CD4-positive, alpha-beta memory T cell (primary cell): ENCODE measurements at regions of chr6 and their contacts with region 1.

Region 1: GRCh38 chr6:134174672-134175198 is 122.3 kb upstream of the SLC2A12 start:
- DNase-seq: peak; percentile 88 to 93 (median 91)
- H3K4me3 ChIP-seq: peak overlapping the region; percentile 39 to 98
- H3K4me3 Mint-ChIP-seq: peak overlapping the region; percentile 95 to 98 (median 98)
- H3K27ac ChIP-seq: peak overlapping the region; percentile 86
- H3K27ac Mint-ChIP-seq: peak overlapping the region; percentile 91 to 99 (median 96)
- H3K4me1 ChIP-seq: peaks cover 68% of the 10 kb centered on the region
- H3K4me1 Mint-ChIP-seq: peaks cover 39 to 78% (median 63%) of the 10 kb centered on the region in 4 donors
- H3K27me3 ChIP-seq: no peaks in the 10 kb centered on the region
- H3K27me3 Mint-ChIP-seq: no peaks in the 10 kb centered on the region

Region 2: DNA sequence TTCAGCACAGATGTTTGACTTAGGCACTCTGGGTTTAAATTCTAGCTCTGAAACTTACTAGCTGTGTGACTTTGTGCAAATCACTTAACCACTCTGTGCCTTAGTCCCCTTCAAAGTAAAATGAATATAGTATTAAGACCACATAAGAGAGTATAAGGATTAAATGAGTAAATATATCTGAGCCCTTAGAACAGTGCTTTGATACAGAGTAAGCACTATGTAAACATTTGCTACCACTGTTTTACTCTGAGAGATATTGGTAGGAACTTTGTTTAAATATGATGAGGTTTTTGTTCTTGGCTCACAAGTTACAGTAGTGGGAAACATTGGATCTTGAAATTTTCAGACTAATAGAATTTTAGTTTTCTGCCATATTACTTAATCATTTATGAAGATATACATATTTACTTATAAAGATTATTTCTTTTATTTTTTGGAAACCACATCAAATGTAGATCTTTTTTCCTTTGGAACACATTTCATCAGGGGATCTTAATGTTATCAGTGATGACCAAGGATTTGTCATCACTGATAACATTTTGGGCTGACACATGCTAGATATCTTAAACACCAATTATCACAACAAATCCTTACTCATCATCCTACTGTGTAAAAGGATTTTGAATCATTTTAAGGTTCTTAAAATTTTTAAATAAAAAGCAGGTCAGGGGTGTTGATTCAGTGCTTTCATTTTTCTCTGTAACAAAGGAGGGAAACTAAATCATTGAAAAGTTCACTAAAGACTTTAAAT is 707.3 kb before region 1 on chr6:
- CTCF ChIA-PET with region 1: no interaction called
- POLR2A ChIA-PET with region 1: no interaction called
- intact Hi-C with region 1: no loop called
- DNase-seq: no peak
- H3K4me3 ChIP-seq: no peak overlapping the region
- H3K4me3 Mint-ChIP-seq: no peak overlapping the region
- H3K27ac ChIP-seq: no peak overlapping the region
- H3K27ac Mint-ChIP-seq: no peak overlapping the region
- H3K4me1 ChIP-seq: no peaks in the 10 kb centered on the region
- H3K4me1 Mint-ChIP-seq: no peaks in the 10 kb centered on the region
- H3K27me3 ChIP-seq: no peaks in the 10 kb centered on the region
- H3K27me3 Mint-ChIP-seq: no peaks in the 10 kb centered on the region

Region 3: DNA sequence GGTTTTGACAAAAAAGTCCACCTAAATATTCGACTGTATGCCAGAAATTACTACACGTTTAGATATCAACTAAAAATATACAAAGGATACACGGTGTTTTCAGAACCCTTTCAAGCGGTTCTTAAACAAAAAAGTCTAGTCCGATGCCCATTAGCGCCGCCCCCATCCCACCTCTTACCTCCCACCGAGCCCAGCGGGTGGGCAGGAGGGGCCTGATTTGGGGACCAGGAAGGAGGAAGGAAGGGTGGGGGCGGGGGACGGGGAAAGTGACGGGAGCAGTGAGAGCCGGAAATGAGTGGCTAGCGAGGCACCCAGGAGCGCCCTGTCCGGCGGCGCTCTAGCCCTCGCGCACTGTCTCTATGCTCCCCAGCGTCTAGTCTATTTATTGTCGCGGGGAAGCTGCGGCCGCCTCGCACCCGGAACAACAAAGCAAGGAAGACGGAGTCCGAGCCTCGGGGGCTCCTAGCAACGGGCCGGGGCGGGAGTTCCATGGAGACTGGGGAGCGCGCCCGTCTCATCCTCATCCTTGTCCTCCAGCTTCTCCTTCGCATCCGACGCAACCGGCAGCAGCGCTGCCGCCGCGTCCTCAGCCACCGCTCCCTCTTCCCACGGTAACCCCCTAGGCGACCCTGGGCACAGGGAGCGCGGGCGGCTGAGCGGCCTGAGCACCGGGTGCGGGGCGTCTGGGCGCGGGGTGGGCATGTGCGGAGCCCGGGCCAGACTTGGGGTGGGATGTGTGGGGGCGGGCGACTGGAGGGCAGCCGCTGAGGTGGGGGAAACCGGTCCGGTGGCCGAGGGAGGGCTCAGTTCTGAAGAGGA is 221.7 kb before region 1 on chr6 and contains the start of gene TBPL1:
- CTCF ChIA-PET with region 1: no interaction called
- POLR2A ChIA-PET with region 1: no interaction called
- intact Hi-C with region 1: loop called (anchors 2 kb)
- DNase-seq: peak; percentile 83 to 92 (median 84)
- H3K4me3 ChIP-seq: peak within 1 kb of the TSS; percentile 85 to 97
- H3K4me3 Mint-ChIP-seq: peak within 1 kb of the TSS; percentile 89 to 99 (median 97)
- H3K27ac ChIP-seq: peak within 1 kb of the TSS; percentile 65
- H3K27ac Mint-ChIP-seq: peak within 1 kb of the TSS; percentile 92 to 98 (median 96)
- H3K4me1 ChIP-seq: peaks cover 50% of the 10 kb centered on the region
- H3K4me1 Mint-ChIP-seq: peaks cover 37 to 55% (median 42%) of the 10 kb centered on the region in 4 donors
- H3K27me3 ChIP-seq: no peaks in the 10 kb centered on the region
- H3K27me3 Mint-ChIP-seq: no peaks in the 10 kb centered on the region
- total RNA-seq, gene TBPL1: 34.8 to 39.2 TPM

Region 4: GRCh38 chr6:134247231-134247833 is 72.6 kb after region 1 on chr6:
- CTCF ChIA-PET with region 1: interaction called, 8 read pairs
- POLR2A ChIA-PET with region 1: interaction called, 5 read pairs
- intact Hi-C with region 1: loop called (anchors 1 kb)
- DNase-seq: peak; percentile 85 to 95 (median 92)
- H3K4me3 ChIP-seq: peak overlapping the region in 1 of 2 donors; percentile 5
- H3K4me3 Mint-ChIP-seq: peak overlapping the region; percentile 60 to 82 (median 76)
- H3K27ac ChIP-seq: peak overlapping the region; percentile 60
- H3K27ac Mint-ChIP-seq: peak overlapping the region; percentile 90 to 99 (median 98)
- H3K4me1 ChIP-seq: peaks cover 63% of the 10 kb centered on the region
- H3K4me1 Mint-ChIP-seq: peaks cover 43 to 65% (median 54%) of the 10 kb centered on the region in 4 donors
- H3K27me3 ChIP-seq: no peaks in the 10 kb centered on the region
- H3K27me3 Mint-ChIP-seq: no peaks in the 10 kb centered on the region

Region 5: GRCh38 chr6:134436281-134436815 is 261.6 kb after region 1 on chr6:
- CTCF ChIA-PET with region 1: interaction called, 6 read pairs
- POLR2A ChIA-PET with region 1: no interaction called
- intact Hi-C with region 1: loop called (anchors 1 kb)
- DNase-seq: peak in 3 of 5 donors; percentile 6 to 77 (median 14)
- H3K4me3 ChIP-seq: peak overlapping the region; percentile 5 to 37
- H3K4me3 Mint-ChIP-seq: peak overlapping the region; percentile 76 to 91 (median 83)
- H3K27ac ChIP-seq: no peak overlapping the region
- H3K27ac Mint-ChIP-seq: peak overlapping the region; percentile 13 to 88 (median 51)
- H3K4me1 ChIP-seq: peaks cover 23% of the 10 kb centered on the region
- H3K4me1 Mint-ChIP-seq: peaks cover 18 to 20% (median 19%) of the 10 kb centered on the region in 4 donors
- H3K27me3 ChIP-seq: no peaks in the 10 kb centered on the region
- H3K27me3 Mint-ChIP-seq: no peaks in the 10 kb centered on the region

Region 6: DNA sequence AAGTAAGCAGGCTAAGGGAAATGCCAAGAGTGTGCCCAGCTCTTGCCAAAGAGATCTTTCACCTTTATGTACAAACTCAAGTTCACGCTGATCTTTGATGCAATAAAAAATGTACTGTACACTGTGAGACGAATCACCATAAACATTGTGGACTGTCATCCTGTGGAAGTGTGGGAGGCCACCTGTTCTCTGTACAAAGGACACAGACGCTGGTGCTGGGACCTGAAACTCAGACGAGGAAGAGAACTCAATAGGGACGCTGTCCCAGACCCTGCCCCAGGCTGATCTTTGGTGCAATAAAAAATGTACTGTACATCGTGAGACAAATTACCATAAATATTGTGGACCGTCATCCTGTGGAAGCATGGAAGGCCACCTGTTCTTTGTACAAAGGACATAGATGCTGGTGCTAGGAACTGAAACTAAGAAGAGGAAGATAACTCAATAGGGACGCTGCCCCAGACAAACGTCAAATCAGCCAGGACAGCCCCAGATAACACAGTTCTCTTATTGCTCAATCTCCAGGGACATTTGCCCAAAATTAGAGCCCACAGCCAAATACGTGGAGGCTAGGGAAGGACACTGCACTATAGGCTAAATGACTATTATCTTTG is 455.9 kb after region 1 on chr6:
- CTCF ChIA-PET with region 1: interaction called, 10 read pairs
- POLR2A ChIA-PET with region 1: interaction called, 3 read pairs
- intact Hi-C with region 1: no loop called
- DNase-seq: no peak
- H3K4me3 ChIP-seq: no peak overlapping the region
- H3K4me3 Mint-ChIP-seq: peak overlapping the region in 1 of 8 donors; percentile 2
- H3K27ac ChIP-seq: no peak overlapping the region
- H3K27ac Mint-ChIP-seq: no peak overlapping the region
- H3K4me1 ChIP-seq: peaks cover 9% of the 10 kb centered on the region
- H3K4me1 Mint-ChIP-seq: peaks cover 12 to 32% (median 21%) of the 10 kb centered on the region in 4 donors
- H3K27me3 ChIP-seq: no peaks in the 10 kb centered on the region
- H3K27me3 Mint-ChIP-seq: no peaks in the 10 kb centered on the region

Region 7: DNA sequence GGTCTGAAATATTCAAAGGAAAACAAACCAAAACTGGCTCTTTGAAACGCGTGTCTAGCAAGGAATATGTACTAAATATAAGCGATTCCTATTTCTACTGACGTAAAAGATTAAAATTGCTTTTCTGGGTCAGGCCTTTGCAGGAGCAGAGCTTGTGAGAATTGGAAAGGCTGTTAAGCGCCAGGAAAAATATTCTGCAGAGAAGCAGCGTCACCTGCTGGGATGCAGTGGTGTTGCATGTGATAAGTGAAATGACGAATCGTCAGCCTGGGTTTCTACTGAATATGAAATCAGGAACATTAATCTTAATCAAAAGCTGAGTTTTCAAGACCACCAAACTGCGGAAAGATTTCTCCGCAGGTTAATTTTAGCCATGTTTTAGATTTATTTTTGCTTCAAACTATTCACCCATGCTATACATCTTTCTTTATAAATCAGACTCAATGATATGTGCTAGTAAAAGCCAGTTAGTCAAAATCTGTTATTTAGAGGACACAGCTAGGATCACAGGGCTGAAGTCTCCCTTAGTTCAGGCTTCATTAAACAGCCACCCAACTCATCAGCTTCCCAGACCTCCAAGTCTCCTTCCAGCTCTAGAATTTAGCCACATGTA is 707.8 kb after region 1 on chr6:
- CTCF ChIA-PET with region 1: interaction called, 6 read pairs
- POLR2A ChIA-PET with region 1: no interaction called
- intact Hi-C with region 1: loop called (anchors 1 kb)
- DNase-seq: peak; percentile 22 to 49 (median 45)
- H3K4me3 ChIP-seq: no peak overlapping the region
- H3K4me3 Mint-ChIP-seq: no peak overlapping the region
- H3K27ac ChIP-seq: no peak overlapping the region
- H3K27ac Mint-ChIP-seq: no peak overlapping the region
- H3K4me1 ChIP-seq: no peaks in the 10 kb centered on the region
- H3K4me1 Mint-ChIP-seq: no peaks in the 10 kb centered on the region
- H3K27me3 ChIP-seq: no peaks in the 10 kb centered on the region
- H3K27me3 Mint-ChIP-seq: peaks cover 14 to 18% of the 10 kb centered on the region in 2 donors

Region 8: DNA sequence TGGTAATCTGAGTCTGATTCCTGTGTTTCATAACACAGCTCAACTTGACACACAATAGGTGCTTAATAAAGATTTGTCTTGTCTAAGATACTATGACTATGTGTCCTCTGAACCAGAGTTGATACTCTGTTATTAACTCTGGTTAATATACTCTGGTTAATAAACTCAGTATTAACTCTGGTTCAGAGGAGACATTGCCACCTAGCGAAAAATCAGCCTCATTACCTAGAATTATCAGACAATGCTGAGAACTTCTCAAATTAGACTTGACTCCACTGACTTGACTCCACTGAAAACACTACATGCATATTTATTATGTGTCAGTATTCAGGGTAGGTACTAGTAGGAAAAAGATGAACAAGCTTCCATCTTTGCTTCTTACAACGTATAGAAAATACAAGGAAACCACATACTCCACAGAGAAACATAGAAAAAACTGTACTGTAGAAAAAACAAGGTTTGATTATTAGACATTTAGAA is 1249.0 kb after region 1 on chr6:
- CTCF ChIA-PET with region 1: no interaction called
- POLR2A ChIA-PET with region 1: no interaction called
- intact Hi-C with region 1: loop called (anchors 5 kb)
- DNase-seq: peak in 4 of 5 donors; percentile 13 to 24 (median 21)
- H3K4me3 ChIP-seq: no peak overlapping the region
- H3K4me3 Mint-ChIP-seq: no peak overlapping the region
- H3K27ac ChIP-seq: no peak overlapping the region
- H3K27ac Mint-ChIP-seq: no peak overlapping the region
- H3K4me1 ChIP-seq: no peaks in the 10 kb centered on the region
- H3K4me1 Mint-ChIP-seq: no peaks in the 10 kb centered on the region
- H3K27me3 ChIP-seq: no peaks in the 10 kb centered on the region
- H3K27me3 Mint-ChIP-seq: no peaks in the 10 kb centered on the region